Left cardiac atrium (tissue), 4 donors: ENCODE measurements at regions of chr14 and their contacts with region 1.

Region 1: GRCh38 chr14:94129111-94129757 is at the start of gene IFI27L2:
- DNase-seq: peak; percentile 82
- ATAC-seq: peak; percentile 95 to 96
- total RNA-seq, gene IFI27L2: 58.7 to 63.3 TPM

Region 2: GRCh38 chr14:94080471-94081289 is 48.6 kb before region 1 on chr14 and contains the start of gene DDX24:
- intact Hi-C with region 1: loop called in 1 of 2 experiments (anchors 2 kb)
- DNase-seq: peak; percentile 98
- ATAC-seq: peak; percentile 100
- total RNA-seq, gene DDX24: 166 to 253 TPM